Vagina (tissue), 2 donors: ENCODE measurements at regions of chr3 and their contacts with region 1.

Region 1: GRCh38 chr3:42229942-42230688 is 35.9 kb downstream of the CCK start:
- DNase-seq: peak in 1 of 2 donors; percentile 74
- H3K4me3 ChIP-seq: no peak overlapping the region
- H3K27ac ChIP-seq: no peak overlapping the region
- H3K4me1 ChIP-seq: peaks cover 4% of the 10 kb centered on the region
- H3K27me3 ChIP-seq: no peaks in the 10 kb centered on the region
- CTCF ChIP-seq: peak; percentile 14 to 53 (median 37)
- POLR2A ChIP-seq: no peak

Region 2: GRCh38 chr3:42190701-42191462 is 39.2 kb before region 1 on chr3:
- intact Hi-C with region 1: no loop called
- DNase-seq: no peak
- H3K4me3 ChIP-seq: no peak overlapping the region
- H3K27ac ChIP-seq: no peak overlapping the region
- H3K4me1 ChIP-seq: no peaks in the 10 kb centered on the region
- H3K27me3 ChIP-seq: no peaks in the 10 kb centered on the region
- CTCF ChIP-seq: peak; percentile 34 to 62 (median 59)
- POLR2A ChIP-seq: no peak

Region 3: DNA sequence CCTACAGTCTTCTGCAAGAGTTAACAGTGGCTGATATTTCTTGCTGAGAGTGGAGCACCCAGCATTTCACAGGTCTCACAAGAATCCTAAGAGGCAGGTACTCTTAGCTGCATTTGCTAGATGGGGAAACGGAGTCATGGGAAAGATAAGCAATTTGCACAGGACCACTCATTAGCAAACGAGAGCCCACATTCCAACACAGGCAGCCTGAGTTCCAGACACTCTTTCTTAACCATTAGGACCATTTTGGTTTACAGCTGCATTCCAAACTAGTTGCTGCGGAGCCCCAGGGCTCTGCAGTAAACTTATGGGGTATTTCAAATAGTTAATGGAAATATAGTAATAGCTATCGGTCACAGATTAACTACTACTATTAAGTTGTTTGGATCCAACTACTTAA is 137.8 kb after region 1 on chr3:
- intact Hi-C with region 1: no loop called
- DNase-seq: no peak
- H3K4me3 ChIP-seq: no peak overlapping the region
- H3K27ac ChIP-seq: no peak overlapping the region
- H3K4me1 ChIP-seq: no peaks in the 10 kb centered on the region
- H3K27me3 ChIP-seq: no peaks in the 10 kb centered on the region
- CTCF ChIP-seq: no peak
- POLR2A ChIP-seq: no peak

Region 4: GRCh38 chr3:42443819-42444436 is 213.8 kb after region 1 on chr3:
- intact Hi-C with region 1: loop called (anchors 1 kb)
- DNase-seq: no peak
- H3K4me3 ChIP-seq: no peak overlapping the region
- H3K27ac ChIP-seq: no peak overlapping the region
- H3K4me1 ChIP-seq: no peaks in the 10 kb centered on the region
- H3K27me3 ChIP-seq: no peaks in the 10 kb centered on the region
- CTCF ChIP-seq: peak; percentile 59 to 84 (median 80)
- POLR2A ChIP-seq: no peak